ENCODE measurements at regions of chr1 and their contacts with region 1.

Region 1: DNA sequence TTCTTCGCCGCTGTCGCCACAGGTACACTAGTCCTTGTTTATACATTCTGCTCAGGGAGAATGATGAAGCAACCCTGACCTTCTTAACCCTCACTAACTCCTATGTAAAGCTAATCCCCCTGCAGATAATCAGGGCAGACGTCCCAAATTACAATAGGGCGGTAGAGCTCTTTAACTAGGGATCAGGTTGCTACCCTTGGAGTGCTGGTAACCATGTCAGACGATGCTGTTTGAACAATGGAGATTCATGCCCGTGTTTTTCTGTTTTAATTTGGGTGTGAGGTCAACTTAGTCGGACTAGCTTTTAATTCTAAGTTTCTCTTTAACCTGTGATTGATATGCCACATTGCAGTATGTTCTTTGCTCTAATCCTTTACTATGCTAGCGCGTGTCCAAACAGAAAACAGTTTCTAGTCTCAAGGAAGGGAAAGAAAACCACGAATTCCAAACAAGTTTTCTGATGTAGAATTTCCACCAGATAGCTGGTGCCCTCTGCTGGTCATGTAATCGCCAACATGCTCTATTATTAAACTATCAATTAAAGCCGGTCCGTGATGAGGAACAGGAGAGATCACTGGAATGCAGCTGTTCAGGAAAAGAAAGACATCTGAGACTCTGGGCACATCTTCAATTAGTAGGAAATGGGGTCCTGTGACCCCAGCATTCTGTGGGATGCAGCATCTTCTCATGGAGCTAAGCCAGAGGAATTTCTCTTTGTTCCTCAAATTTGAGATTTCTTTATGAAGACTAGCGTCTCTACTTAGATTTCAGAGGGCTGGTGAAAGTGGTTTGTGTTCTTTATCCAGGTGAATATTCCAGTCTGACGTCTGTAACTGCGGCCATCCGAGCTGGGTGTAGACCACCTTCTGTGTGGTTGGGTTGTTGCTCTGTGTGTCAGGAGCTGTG is 18.3 kb upstream of the VAMP3 start:
- DNase-seq: peak; percentile 58
- ATAC-seq: peak; percentile 61
- H3K4me3 Mint-ChIP-seq: peak overlapping the region; percentile 38
- H3K27ac Mint-ChIP-seq: peak overlapping the region; percentile 16
- H3K4me1 Mint-ChIP-seq: peaks cover 42% of the 10 kb centered on the region
- H3K27me3 Mint-ChIP-seq: peaks cover 6% of the 10 kb centered on the region

Region 2: DNA sequence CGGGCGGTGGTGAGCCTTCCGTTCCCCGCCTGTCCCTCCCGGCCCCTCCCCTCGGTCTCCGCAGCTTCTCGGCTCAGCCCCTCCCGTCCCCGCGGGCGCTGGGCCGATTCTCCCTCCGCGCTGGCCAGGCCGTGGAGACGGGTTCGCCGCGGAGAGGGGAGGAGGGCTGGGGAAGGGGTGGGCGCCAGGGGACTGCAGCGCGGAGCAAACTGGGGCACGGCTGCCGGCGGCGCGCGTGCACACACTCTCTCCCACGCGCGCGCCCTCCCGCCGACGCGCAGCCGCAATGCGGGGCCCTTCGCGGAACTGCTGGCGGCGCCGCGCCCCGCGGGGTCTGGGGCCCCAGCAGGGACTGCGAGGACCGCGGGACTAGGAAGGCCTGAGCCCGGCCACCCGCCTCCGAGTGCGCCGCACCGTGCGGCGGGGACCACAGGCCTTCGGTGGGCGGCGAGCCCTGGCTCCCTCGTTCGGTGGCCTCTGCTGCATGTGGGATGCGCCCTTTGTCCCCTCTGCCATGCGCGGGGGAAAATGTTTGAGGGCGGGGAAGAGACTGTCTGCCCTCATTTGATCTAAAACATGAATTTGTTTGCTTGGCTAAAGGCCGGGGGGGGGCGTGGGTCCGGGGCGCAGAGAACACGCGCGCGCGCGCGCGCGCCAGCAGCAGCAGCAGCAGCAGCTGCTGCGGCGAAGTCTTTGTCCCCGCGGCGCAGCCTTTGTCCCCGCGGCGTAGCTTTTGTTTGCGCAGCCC is 72.4 kb before region 1 on chr1:
- CTCF ChIA-PET with region 1: interaction called, 426 read pairs
- DNase-seq: no peak
- ATAC-seq: peak; percentile 61
- H3K4me3 Mint-ChIP-seq: peak overlapping the region; percentile 71
- H3K27ac Mint-ChIP-seq: no peak overlapping the region
- H3K4me1 Mint-ChIP-seq: no peaks in the 10 kb centered on the region
- H3K27me3 Mint-ChIP-seq: peaks cover 15% of the 10 kb centered on the region

Region 3: GRCh38 chr1:7704214-7705047 is 48.3 kb before region 1 on chr1:
- CTCF ChIA-PET with region 1: interaction called, 12 read pairs
- DNase-seq: peak; percentile 92
- ATAC-seq: peak; percentile 98
- H3K4me3 Mint-ChIP-seq: peak overlapping the region; percentile 68
- H3K27ac Mint-ChIP-seq: no peak overlapping the region
- H3K4me1 Mint-ChIP-seq: peaks cover 12% of the 10 kb centered on the region
- H3K27me3 Mint-ChIP-seq: peaks cover 73% of the 10 kb centered on the region

Region 4: GRCh38 chr1:7733276-7733675 is 19.5 kb before region 1 on chr1:
- CTCF ChIA-PET with region 1: interaction called, 10 read pairs
- DNase-seq: no peak
- ATAC-seq: no peak
- H3K4me3 Mint-ChIP-seq: no peak overlapping the region
- H3K27ac Mint-ChIP-seq: no peak overlapping the region
- H3K4me1 Mint-ChIP-seq: no peaks in the 10 kb centered on the region
- H3K27me3 Mint-ChIP-seq: peaks cover 18% of the 10 kb centered on the region

Region 5: GRCh38 chr1:7770997-7771822 is 18.4 kb after region 1 on chr1 and contains the start of gene VAMP3:
- CTCF ChIA-PET with region 1: interaction called, 22 read pairs
- DNase-seq: peak; percentile 90
- ATAC-seq: peak; percentile 94
- H3K4me3 Mint-ChIP-seq: peak within 1 kb of the TSS; percentile 83
- H3K27ac Mint-ChIP-seq: peak within 1 kb of the TSS; percentile 83
- H3K4me1 Mint-ChIP-seq: peaks cover 35% of the 10 kb centered on the region
- H3K27me3 Mint-ChIP-seq: peaks cover 32% of the 10 kb centered on the region
- total RNA-seq, gene VAMP3: 25.7 to 33.1 TPM

Region 6: DNA sequence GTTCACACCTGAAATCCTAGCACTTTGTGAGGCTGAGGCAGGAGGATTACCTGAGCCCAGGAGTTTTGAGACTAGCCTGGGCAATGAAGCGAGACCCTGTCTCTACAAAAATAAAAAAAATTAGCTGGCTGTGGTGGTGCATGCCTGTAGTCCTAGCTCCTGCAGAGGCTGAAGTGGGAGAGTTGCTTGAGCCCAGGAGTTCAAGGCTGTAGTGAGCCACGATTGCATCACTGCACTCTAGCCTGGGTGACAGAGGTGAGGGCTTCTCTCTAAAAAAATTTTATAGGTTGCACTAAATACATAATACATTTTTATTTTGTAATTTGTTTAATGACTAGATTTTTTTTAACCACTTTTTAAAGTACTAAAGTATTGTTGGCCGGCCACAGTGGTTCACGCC is 214.9 kb after region 1 on chr1:
- CTCF ChIA-PET with region 1: no interaction called
- DNase-seq: no peak
- ATAC-seq: no peak
- H3K4me3 Mint-ChIP-seq: no peak overlapping the region
- H3K27ac Mint-ChIP-seq: no peak overlapping the region
- H3K4me1 Mint-ChIP-seq: peaks cover 53% of the 10 kb centered on the region
- H3K27me3 Mint-ChIP-seq: no peaks in the 10 kb centered on the region

Measured in activated CD8-positive, alpha-beta memory T cell treated with anti-CD3 and anti-CD28 coated beads, Interleukin-2, amount 10 ng/mL, durations not matched to agents 7 days and 5 days (primary cell).